ENCODE measurements at regions of chr7 and their contacts with region 1.

Region 1: DNA sequence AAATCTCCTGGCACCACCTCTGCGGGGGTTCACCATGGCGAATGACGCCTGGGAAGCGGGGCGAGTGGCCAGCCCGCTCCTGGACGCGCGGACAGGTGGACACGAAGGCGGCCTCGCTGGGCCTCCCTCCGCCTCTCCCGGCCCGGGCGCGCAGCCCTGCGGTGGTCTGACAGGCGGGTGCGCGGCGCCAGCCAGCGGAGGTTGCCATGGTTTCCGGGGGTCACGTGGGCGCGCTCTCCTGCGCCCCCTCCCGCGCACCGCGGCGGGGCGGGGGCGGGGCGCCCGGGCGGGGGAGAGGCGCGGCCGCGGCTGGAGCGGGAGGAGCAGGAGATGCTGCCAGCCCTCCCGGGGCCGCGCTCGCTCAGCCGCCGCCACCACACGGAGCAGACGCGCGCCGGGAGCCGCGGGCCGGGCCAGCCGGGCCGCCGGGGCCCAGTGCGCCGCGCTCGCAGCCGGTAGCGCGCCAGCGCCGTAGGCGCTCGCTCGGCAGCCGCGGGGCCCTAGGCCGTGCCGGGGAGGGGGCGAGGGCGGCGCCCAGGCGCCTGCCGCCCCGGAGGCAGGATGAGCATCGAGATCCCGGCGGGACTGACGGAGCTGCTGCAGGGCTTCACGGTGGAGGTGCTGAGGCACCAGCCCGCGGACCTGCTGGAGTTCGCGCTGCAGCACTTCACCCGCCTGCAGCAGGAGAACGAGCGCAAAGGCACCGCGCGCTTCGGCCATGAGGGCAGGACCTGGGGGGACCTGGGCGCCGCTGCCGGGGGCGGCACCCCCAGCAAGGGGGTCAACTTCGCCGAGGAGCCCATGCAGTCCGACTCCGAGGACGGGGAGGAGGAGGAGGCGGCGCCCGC is at the start of gene PRKAR2B:
- DNase-seq: peak; percentile 63
- H3K4me3 ChIP-seq: peak within 1 kb of the TSS; percentile 62 to 74
- H3K27ac ChIP-seq: peak within 1 kb of the TSS; percentile 80 to 88
- H3K4me1 ChIP-seq: no peaks in the 10 kb centered on the region
- H3K27me3 ChIP-seq: no peaks in the 10 kb centered on the region
- CTCF ChIP-seq: peak; percentile 10 to 32 (median 20)
- POLR2A ChIP-seq: no peak
- total RNA-seq, gene PRKAR2B: 12.4 to 65.7 TPM

Region 2: GRCh38 chr7:106927536-106927935 is 117.0 kb before region 1 on chr7:
- intact Hi-C with region 1: no loop called
- DNase-seq: no peak
- H3K4me3 ChIP-seq: no peak overlapping the region
- H3K27ac ChIP-seq: no peak overlapping the region
- H3K4me1 ChIP-seq: no peaks in the 10 kb centered on the region
- H3K27me3 ChIP-seq: no peaks in the 10 kb centered on the region
- CTCF ChIP-seq: no peak
- POLR2A ChIP-seq: no peak

Region 3: DNA sequence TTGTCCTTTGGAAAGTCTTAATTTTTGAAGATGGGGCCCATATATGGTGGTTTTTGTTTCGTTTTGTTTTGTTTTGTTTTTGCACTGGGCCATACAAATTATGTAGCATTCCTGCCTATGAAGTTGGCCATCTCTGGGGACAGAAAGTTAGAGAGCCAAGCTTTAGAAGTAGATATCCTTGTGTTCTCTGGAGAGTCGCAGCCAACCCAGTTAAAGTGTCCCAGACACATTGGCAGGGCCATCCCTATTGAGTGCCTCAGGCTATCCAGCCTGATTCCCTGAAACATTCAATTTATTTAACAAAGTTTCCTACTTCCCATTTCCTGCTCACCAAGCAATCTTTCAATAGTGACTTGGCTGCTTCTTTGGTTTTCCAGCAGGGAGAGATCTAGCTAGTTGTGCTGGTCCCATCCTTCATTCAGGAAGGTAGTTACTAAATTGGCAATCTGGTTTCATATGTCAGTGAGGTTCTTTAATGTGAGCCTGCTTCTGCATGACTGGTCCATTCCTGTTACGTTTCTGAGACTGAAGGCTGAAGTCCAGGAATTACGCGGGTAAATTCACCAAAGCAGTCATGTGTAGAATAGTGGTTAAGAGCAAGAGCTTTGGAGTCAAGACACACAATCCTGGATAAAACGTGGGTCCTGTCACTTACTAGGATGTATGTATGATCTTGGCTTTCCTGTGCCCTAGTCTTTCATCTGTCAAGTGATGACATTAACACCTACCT is 75.0 kb after region 1 on chr7:
- intact Hi-C with region 1: loop called (anchors 2 kb)
- DNase-seq: no peak
- H3K4me3 ChIP-seq: no peak overlapping the region
- H3K27ac ChIP-seq: no peak overlapping the region
- H3K4me1 ChIP-seq: no peaks in the 10 kb centered on the region
- H3K27me3 ChIP-seq: no peaks in the 10 kb centered on the region
- CTCF ChIP-seq: no peak
- POLR2A ChIP-seq: no peak

Region 4: GRCh38 chr7:107130487-107131225 is 86.1 kb after region 1 on chr7:
- intact Hi-C with region 1: no loop called
- DNase-seq: no peak
- H3K4me3 ChIP-seq: no peak overlapping the region
- H3K27ac ChIP-seq: no peak overlapping the region
- H3K4me1 ChIP-seq: no peaks in the 10 kb centered on the region
- H3K27me3 ChIP-seq: no peaks in the 10 kb centered on the region
- CTCF ChIP-seq: no peak
- POLR2A ChIP-seq: no peak

Region 5: DNA sequence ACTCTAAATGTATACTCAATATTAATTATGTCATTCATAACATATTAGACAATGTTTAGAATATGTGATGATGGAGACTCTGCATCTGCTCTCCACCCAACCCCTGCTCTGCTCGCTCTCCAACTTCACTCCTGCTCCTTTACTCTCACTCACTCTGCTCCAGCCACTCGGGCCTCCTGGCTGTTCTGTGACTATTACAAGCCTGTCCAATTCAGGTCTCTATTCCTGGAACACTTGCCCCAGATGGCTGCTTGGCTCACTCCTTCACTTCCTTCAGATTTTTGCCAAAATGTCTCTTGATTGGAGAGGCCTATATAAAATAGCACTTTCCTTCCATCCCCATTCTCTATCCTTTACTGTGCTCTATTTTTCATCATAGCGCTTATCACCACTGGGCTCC is 209.0 kb after region 1 on chr7:
- intact Hi-C with region 1: no loop called
- DNase-seq: no peak
- H3K4me3 ChIP-seq: no peak overlapping the region
- H3K27ac ChIP-seq: no peak overlapping the region
- H3K4me1 ChIP-seq: no peaks in the 10 kb centered on the region
- H3K27me3 ChIP-seq: no peaks in the 10 kb centered on the region
- CTCF ChIP-seq: no peak
- POLR2A ChIP-seq: no peak

Region 6: GRCh38 chr7:107286751-107287621 is 242.4 kb after region 1 on chr7:
- intact Hi-C with region 1: no loop called
- DNase-seq: peak; percentile 7
- H3K4me3 ChIP-seq: no peak overlapping the region
- H3K27ac ChIP-seq: no peak overlapping the region
- H3K4me1 ChIP-seq: no peaks in the 10 kb centered on the region
- H3K27me3 ChIP-seq: no peaks in the 10 kb centered on the region
- CTCF ChIP-seq: no peak
- POLR2A ChIP-seq: no peak

Measured in prostate gland (tissue), 2 donors.